Ascending aorta (tissue), 2 donors: ENCODE measurements at regions of chr1 and their contacts with region 1.

Region 1: GRCh38 chr1:43529206-43529731 is 1.4 kb upstream of the PTPRF start:
- DNase-seq: peak in 1 of 2 donors; percentile 91
- H3K4me3 ChIP-seq: no peak overlapping the region
- H3K27ac ChIP-seq: no peak overlapping the region
- H3K4me1 ChIP-seq: peaks cover 3 to 9% of the 10 kb centered on the region in 2 donors
- H3K27me3 ChIP-seq: no peaks in the 10 kb centered on the region
- CTCF ChIP-seq: peak; percentile 90 to 91 (median 91)

Region 2: GRCh38 chr1:42807056-42807668 is 722.1 kb before region 1 on chr1:
- intact Hi-C with region 1: no loop called
- DNase-seq: no peak
- H3K4me3 ChIP-seq: no peak overlapping the region
- H3K27ac ChIP-seq: no peak overlapping the region
- H3K4me1 ChIP-seq: no peaks in the 10 kb centered on the region
- H3K27me3 ChIP-seq: no peaks in the 10 kb centered on the region
- CTCF ChIP-seq: no peak

Region 3: DNA sequence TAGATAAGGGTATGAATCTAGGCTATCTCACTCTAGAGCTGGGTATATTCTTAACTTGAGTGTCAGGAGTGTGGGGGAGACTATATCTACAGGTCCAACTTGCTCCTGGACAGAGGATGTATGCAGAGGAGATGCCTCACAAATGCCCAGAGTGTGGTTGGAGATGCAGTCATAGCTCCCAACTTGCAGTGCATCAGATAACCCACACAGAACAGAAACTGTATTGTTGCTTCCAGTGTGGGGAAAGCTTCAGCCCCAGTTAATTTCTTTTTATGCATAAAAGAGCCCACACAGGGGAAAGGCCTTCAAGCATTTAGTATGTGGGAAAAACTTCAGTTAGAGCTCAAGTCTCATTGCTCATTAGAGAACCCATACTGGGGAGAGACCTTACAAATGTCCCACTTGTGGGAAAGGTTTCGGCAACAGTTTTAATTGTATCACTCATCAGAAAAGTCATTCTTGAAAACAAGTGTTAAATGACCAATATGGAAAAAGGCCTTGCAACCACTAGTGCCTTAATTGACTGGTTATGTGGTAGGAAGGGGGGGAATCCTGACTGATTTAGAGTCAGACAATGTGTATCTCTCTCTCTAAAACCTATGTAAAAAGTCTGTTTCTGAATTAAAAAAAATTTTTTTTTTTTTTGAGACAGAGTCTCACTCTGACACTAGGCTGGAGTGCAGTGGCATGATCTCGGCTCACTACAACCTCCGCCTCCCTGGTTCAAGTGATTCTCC is 425.1 kb before region 1 on chr1:
- intact Hi-C with region 1: no loop called
- DNase-seq: no peak
- H3K4me3 ChIP-seq: no peak overlapping the region
- H3K27ac ChIP-seq: no peak overlapping the region
- H3K4me1 ChIP-seq: no peaks in the 10 kb centered on the region
- H3K27me3 ChIP-seq: no peaks in the 10 kb centered on the region
- CTCF ChIP-seq: no peak

Region 4: DNA sequence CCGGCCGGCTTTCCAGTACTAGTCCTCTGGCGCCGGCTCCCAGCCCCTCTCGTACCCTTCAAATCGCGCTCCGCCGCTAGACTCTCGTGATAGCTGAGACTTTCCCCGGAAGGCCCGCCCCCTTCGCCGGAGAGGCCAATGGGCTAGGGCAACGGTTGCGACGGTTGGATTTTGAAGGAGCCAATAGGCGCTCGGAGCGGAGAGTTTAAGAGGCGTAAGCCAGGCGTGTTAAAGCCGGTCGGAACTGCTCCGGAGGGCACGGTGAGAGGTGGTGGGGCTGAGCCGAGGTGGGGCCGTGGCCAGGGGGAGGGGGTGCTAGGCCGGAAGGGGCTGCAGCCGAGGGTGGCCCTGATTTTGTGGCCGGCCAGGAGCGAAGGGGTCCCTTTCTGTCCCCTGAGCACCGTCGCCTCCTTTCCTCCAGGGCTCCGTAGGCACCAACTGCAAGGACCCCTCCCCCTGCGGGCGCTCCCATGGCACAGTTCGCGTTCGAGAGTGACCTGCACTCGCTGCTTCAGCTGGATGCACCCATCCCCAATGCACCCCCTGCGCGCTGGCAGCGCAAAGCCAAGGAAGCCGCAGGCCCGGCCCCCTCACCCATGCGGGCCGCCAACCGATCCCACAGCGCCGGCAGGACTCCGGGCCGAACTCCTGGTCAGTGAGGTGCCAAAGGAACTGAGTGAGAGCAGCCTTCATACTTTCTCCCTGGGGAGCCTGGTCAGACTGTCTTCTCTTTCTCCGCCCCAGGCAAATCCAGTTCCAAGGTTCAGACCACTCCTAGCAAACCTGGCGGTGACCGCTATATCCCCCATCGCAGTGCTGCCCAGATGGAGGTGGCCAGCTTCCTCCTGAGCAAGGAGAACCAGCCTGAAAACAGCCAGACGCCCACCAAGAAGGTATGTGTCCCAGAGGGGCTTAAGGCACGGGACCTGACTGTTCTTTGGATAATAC is 170.2 kb before region 1 on chr1 and contains the start of gene CDC20:
- intact Hi-C with region 1: loop called (anchors 5 kb)
- DNase-seq: peak; percentile 96 to 100
- H3K4me3 ChIP-seq: peak within 1 kb of the TSS; percentile 63 to 67
- H3K27ac ChIP-seq: peak within 1 kb of the TSS; percentile 84 to 86
- H3K4me1 ChIP-seq: peaks cover 6 to 7% of the 10 kb centered on the region in 2 donors
- H3K27me3 ChIP-seq: no peaks in the 10 kb centered on the region
- CTCF ChIP-seq: no peak
- total RNA-seq, gene CDC20: not detected

Region 5: DNA sequence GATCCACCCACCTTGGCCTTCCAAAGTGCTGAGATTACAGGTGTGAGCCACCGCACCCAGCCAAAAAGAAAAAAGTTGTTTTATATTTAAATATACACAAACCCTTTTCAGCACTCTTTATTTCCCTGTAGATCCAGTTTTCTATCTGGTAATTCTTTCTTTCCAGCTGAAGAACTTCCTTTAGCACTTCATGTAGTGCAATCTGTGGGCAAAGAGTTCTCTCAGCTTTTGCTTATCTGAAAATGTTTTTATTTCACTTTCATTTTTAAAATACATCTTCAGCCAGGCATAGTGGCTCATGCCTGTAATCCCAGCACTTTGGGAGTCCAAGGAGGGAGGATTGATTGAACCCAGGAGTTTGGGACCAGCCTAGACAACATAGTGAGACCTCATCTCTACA is 47.1 kb before region 1 on chr1:
- intact Hi-C with region 1: no loop called
- DNase-seq: no peak
- H3K4me3 ChIP-seq: no peak overlapping the region
- H3K27ac ChIP-seq: no peak overlapping the region
- H3K4me1 ChIP-seq: no peaks in the 10 kb centered on the region
- H3K27me3 ChIP-seq: no peaks in the 10 kb centered on the region
- CTCF ChIP-seq: no peak

Region 6: GRCh38 chr1:43558346-43558841 is 29.1 kb after region 1 on chr1:
- intact Hi-C with region 1: loop called (anchors 2 kb)
- DNase-seq: peak in 1 of 2 donors; percentile 69
- H3K4me3 ChIP-seq: no peak overlapping the region
- H3K27ac ChIP-seq: peak overlapping the region in 1 of 2 donors; percentile 44
- H3K4me1 ChIP-seq: peaks cover 0 to 6% of the 10 kb centered on the region in 2 donors
- H3K27me3 ChIP-seq: no peaks in the 10 kb centered on the region
- CTCF ChIP-seq: no peak

Region 7: DNA sequence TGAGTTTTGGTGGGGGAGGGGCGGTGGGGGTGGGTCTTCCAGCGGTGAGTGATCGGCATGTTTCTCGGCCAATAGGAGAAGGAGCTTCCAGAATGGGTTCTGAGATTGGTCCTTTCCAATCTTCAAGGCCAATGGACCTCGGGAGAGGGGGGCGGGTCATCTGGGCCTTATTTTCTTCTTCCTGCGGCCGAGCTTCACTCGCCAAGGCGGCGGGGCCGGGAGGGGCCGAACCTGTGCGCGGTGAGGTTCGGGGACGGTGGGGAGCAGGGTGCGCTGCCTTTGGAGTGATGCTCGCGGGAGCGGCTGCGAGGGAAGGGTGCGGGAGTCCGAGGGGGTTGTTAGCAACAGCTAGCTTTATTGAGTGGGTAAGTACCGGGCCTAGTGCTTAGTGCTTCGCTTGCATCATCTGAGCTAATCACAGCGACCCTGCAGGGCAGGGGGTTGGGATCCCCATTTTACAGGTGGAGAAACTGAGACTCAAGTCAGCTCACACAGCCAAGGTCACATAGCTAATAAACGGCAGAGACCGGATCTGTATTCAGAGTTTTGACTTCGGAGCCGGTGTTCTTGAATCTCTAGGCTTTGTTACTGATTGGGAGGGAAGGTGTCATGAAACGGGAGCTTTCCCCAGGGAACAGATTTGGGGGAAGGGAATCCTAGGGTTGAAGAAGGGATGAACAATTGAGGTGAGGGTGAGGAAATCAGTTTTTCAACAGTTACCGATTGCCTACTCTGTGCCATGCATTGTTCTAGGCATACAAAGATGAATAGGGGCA is 121.2 kb after region 1 on chr1:
- intact Hi-C with region 1: loop called (anchors 1 kb)
- DNase-seq: peak; percentile 87 to 97
- H3K4me3 ChIP-seq: peak overlapping the region; percentile 77 to 83
- H3K27ac ChIP-seq: peak overlapping the region; percentile 88 to 89
- H3K4me1 ChIP-seq: peaks cover 6 to 12% of the 10 kb centered on the region in 2 donors
- H3K27me3 ChIP-seq: no peaks in the 10 kb centered on the region
- CTCF ChIP-seq: no peak

Region 8: DNA sequence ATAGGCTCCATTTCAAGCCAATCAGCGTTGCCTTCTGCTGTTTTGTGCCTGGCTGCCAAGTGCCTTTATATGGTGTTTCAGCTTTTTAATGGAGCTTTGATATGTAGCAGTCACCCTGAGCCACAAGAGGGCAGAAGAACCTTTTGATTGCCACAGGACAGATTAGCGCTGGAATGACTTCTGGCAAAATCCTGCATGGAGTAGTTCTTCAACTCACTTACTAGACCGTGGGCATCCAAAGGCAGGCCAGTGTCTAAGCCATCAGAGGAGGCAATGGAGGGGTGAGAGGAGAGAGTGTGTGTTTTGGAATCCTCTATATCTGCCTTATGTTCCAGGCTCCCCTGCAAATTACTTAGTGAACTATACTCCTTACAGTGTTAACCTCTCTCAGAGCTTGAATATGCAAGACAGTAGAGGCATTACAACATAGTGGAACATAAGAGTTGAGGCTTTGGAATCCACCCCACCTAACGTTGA is 234.3 kb after region 1 on chr1:
- intact Hi-C with region 1: loop called (anchors 2 kb)
- DNase-seq: peak in 1 of 2 donors; percentile 90
- H3K4me3 ChIP-seq: no peak overlapping the region
- H3K27ac ChIP-seq: no peak overlapping the region
- H3K4me1 ChIP-seq: peaks cover 0 to 4% of the 10 kb centered on the region in 2 donors
- H3K27me3 ChIP-seq: no peaks in the 10 kb centered on the region
- CTCF ChIP-seq: peak; percentile 77 to 90 (median 85)

Region 9: DNA sequence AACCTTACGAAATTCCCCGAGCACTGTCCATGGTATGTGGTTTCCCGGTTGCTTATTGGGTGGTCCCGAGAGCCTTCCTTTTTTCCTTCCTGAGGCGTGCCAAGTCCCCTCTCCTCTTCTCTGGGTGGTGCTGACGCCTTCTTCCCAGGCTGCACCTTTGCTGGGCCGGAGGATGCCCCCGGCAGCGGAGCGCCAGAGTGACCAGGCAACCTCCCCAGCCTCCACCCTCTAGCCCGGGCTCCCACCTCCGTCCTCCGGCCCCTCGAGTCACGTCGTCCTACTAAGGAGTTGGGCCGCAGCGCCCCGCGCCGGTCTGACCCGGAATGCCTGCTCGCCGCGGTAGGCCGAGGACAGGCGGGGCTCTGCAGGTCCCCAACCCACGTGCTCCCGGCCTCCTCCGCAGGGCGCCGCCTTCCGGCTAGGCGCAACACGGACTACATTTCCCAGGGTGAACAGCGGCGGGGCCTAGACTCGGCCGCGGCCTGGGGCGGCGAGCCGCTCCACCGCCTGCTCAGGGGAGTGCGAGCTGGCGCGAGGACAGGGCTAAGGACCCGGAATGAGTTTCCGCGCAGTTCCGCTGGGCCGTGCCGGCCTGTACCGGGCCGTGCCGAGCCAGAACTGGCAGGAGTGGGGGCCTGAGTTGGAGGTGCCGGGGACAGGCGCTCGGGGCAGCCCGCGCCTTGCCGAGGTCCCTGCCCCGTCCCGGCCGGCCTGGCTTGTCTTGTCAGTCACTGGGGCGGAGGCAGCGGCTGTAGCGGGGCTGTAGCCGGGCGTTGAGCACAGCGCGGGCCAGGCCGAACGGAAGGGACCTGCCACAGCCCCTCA is 417.2 kb after region 1 on chr1 and contains the start of gene IPO13:
- intact Hi-C with region 1: loop called (anchors 1 kb)
- DNase-seq: peak; percentile 84 to 97
- H3K4me3 ChIP-seq: peak within 1 kb of the TSS; percentile 81 to 85
- H3K27ac ChIP-seq: peak within 1 kb of the TSS; percentile 89 to 98
- H3K4me1 ChIP-seq: peaks cover 13 to 26% of the 10 kb centered on the region in 2 donors
- H3K27me3 ChIP-seq: no peaks in the 10 kb centered on the region
- CTCF ChIP-seq: peak; percentile 73 to 84 (median 80)
- total RNA-seq, gene IPO13: 6.2 TPM